ENCODE measurements at regions of chr5 and their contacts with region 1.

Region 1: GRCh38 chr5:122845229-122846050 is at the start of gene SNX24:
- DNase-seq: peak; percentile 82 to 84
- H3K4me3 ChIP-seq: peak within 1 kb of the TSS; percentile 86 to 95 (median 92)
- H3K27ac ChIP-seq: peak within 1 kb of the TSS; percentile 56 to 93 (median 86)
- H3K4me1 ChIP-seq: peaks cover 16 to 24% of the 10 kb centered on the region in 2 donors
- H3K27me3 ChIP-seq: no peaks in the 10 kb centered on the region
- CTCF ChIP-seq: no peak
- POLR2A ChIP-seq: peak; percentile 41 to 86
- total RNA-seq, gene SNX24: 17.1 to 39.7 (median 33.1) TPM

Region 2: DNA sequence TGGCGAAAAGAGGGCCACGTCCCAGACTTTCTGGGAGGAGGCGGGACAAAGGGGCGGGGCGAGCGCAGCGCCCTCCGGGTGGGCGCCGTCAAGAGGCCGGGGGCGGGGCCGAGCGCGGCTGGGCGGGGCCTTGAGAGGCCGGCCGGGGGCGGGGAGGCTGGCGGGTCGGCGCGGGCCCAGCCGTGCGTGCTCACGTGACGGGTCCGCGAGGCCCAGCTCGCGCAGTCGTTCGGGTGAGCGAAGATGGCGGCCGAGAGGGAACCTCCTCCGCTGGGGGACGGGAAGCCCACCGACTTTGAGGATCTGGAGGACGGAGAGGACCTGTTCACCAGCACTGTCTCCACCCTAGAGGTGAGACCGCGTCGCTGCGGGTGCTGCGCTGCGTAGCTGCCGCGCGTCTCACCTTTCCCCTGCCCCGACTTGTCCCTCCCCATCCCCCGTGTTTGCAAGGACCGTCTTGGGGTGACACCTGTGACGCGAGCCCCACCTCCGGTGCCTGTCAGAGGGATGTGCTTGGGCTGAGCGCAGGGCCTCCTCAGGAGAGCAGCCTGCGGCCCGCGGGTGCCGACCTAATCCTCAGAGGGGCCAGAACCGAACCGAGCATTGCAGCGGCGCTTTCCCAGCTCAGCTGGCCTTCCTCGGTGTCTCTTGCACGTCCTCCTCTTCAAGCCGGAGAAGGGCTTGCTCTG is 70.4 kb before region 1 on chr5 and contains the start of gene SNX2:
- intact Hi-C with region 1: loop called (anchors 5 kb)
- DNase-seq: peak; percentile 93 to 94
- H3K4me3 ChIP-seq: peak within 1 kb of the TSS; percentile 89 to 100 (median 90)
- H3K27ac ChIP-seq: peak within 1 kb of the TSS; percentile 88 to 96 (median 92)
- H3K4me1 ChIP-seq: peaks cover 11 to 12% of the 10 kb centered on the region in 2 donors
- H3K27me3 ChIP-seq: no peaks in the 10 kb centered on the region
- CTCF ChIP-seq: peak in 2 of 6 experiments; percentile 25 to 29
- POLR2A ChIP-seq: peak; percentile 29 to 91
- total RNA-seq, gene SNX2: 113 to 136 (median 125) TPM

Measured in thyroid gland (tissue), 4 donors.